Activated CD8-positive, alpha-beta memory T cell treated with anti-CD3 and anti-CD28 coated beads, Interleukin-2, amount 10 ng/mL, durations not matched to agents 7 days and 5 days (primary cell): ENCODE measurements at regions of chr1 and their contacts with region 1.

Region 1: DNA sequence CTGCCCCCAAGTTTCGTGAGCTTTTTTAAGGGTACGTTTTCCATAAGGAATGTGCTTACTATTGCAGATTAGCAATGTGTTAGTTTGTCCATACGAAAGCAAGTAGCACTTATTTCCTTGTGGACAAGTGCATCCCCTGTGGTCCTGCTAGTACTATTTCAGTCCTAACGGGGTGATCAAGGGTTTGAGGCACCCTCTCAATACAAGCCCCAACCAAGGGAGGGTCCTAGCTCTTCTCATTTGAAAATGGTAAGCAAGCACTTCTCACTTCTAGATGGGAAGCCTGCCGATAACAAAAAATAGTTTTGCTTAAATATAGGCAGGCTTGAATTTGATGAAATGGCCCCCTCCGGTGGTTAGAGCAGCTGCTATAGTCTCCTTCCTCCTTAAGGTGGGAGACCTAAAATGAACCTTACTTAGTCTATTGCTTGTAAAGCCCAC is 64.0 kb upstream of the HMCN1 start:
- DNase-seq: peak; percentile 77
- ATAC-seq: peak; percentile 89
- H3K4me3 Mint-ChIP-seq: no peak overlapping the region
- H3K27ac Mint-ChIP-seq: no peak overlapping the region
- H3K4me1 Mint-ChIP-seq: peaks cover 45% of the 10 kb centered on the region
- H3K27me3 Mint-ChIP-seq: no peaks in the 10 kb centered on the region

Region 2: GRCh38 chr1:185170291-185170848 is 499.8 kb before region 1 on chr1:
- CTCF ChIA-PET with region 1: interaction called, 12 read pairs
- DNase-seq: peak; percentile 68
- ATAC-seq: peak; percentile 92
- H3K4me3 Mint-ChIP-seq: no peak overlapping the region
- H3K27ac Mint-ChIP-seq: peak overlapping the region; percentile 28
- H3K4me1 Mint-ChIP-seq: peaks cover 19% of the 10 kb centered on the region
- H3K27me3 Mint-ChIP-seq: no peaks in the 10 kb centered on the region

Region 3: GRCh38 chr1:185317034-185317885 is 352.9 kb before region 1 on chr1 and contains the start of gene IVNS1ABP:
- CTCF ChIA-PET with region 1: interaction called, 25 read pairs
- DNase-seq: peak; percentile 97
- ATAC-seq: peak; percentile 75
- H3K4me3 Mint-ChIP-seq: peak within 1 kb of the TSS; percentile 99
- H3K27ac Mint-ChIP-seq: peak within 1 kb of the TSS; percentile 97
- H3K4me1 Mint-ChIP-seq: peaks cover 44% of the 10 kb centered on the region
- H3K27me3 Mint-ChIP-seq: no peaks in the 10 kb centered on the region
- total RNA-seq, gene IVNS1ABP: 251 to 509 TPM

Region 4: GRCh38 chr1:185453496-185454192 is 216.6 kb before region 1 on chr1:
- CTCF ChIA-PET with region 1: no interaction called
- DNase-seq: no peak
- ATAC-seq: no peak
- H3K4me3 Mint-ChIP-seq: no peak overlapping the region
- H3K27ac Mint-ChIP-seq: no peak overlapping the region
- H3K4me1 Mint-ChIP-seq: no peaks in the 10 kb centered on the region
- H3K27me3 Mint-ChIP-seq: no peaks in the 10 kb centered on the region

Region 5: GRCh38 chr1:185566995-185567394 is 103.2 kb before region 1 on chr1:
- CTCF ChIA-PET with region 1: interaction called, 10 read pairs
- DNase-seq: peak; percentile 79
- ATAC-seq: peak; percentile 78
- H3K4me3 Mint-ChIP-seq: peak overlapping the region; percentile 39
- H3K27ac Mint-ChIP-seq: peak overlapping the region; percentile 88
- H3K4me1 Mint-ChIP-seq: peaks cover 51% of the 10 kb centered on the region
- H3K27me3 Mint-ChIP-seq: no peaks in the 10 kb centered on the region

Region 6: DNA sequence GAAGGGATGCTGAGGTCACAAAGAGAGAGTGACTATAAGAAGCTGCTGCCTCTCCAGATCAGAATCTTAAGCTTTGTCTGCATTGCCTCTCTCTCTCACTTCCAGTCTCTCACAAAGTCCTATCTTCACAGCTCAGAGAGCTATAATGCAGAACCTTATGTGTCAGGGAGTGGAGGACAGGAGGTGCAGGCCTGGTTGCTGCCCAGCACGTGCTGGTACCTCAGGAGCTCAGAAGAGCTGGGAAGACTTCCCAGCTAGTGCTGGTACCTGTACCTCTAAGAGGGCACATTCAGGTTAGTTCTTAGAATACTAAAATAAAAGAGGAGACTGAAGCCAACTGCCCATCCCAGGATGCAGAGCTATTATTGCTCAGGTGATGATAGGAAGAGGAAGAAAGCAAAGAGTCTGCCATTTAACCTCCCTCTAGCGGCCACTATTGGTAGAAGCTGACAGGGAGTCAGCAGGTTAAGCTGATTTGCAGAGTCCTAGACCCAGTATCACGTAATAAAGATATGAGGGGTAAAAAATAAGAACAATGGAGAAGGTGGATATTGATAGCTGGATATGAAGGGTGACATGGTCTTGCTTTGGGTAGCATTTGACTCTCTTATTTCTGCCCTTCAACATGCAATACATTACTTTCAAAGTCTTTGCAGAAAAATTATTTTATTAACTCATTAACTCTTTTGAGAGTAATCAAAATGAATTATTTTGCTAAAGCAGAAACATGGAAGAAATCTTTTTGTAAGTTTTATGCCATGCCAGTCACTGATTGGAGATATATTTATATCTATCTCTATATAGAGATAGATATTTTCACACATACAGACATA is 74.2 kb before region 1 on chr1:
- CTCF ChIA-PET with region 1: interaction called, 13 read pairs
- DNase-seq: peak; percentile 64
- ATAC-seq: peak; percentile 53
- H3K4me3 Mint-ChIP-seq: no peak overlapping the region
- H3K27ac Mint-ChIP-seq: no peak overlapping the region
- H3K4me1 Mint-ChIP-seq: peaks cover 23% of the 10 kb centered on the region
- H3K27me3 Mint-ChIP-seq: no peaks in the 10 kb centered on the region

Region 7: GRCh38 chr1:185636848-185637247 is 33.4 kb before region 1 on chr1:
- CTCF ChIA-PET with region 1: interaction called, 11 read pairs
- DNase-seq: peak; percentile 85
- ATAC-seq: peak; percentile 96
- H3K4me3 Mint-ChIP-seq: peak overlapping the region; percentile 7
- H3K27ac Mint-ChIP-seq: peak overlapping the region; percentile 88
- H3K4me1 Mint-ChIP-seq: peaks cover 41% of the 10 kb centered on the region
- H3K27me3 Mint-ChIP-seq: no peaks in the 10 kb centered on the region

Region 8: GRCh38 chr1:185652348-185652747 is 17.9 kb before region 1 on chr1:
- CTCF ChIA-PET with region 1: interaction called, 19 read pairs
- DNase-seq: no peak
- ATAC-seq: no peak
- H3K4me3 Mint-ChIP-seq: no peak overlapping the region
- H3K27ac Mint-ChIP-seq: no peak overlapping the region
- H3K4me1 Mint-ChIP-seq: peaks cover 9% of the 10 kb centered on the region
- H3K27me3 Mint-ChIP-seq: no peaks in the 10 kb centered on the region

Region 9: GRCh38 chr1:185984113-185984836 is 314.1 kb after region 1 on chr1:
- CTCF ChIA-PET with region 1: no interaction called
- DNase-seq: no peak
- ATAC-seq: no peak
- H3K4me3 Mint-ChIP-seq: no peak overlapping the region
- H3K27ac Mint-ChIP-seq: no peak overlapping the region
- H3K4me1 Mint-ChIP-seq: peaks cover 9% of the 10 kb centered on the region
- H3K27me3 Mint-ChIP-seq: peaks cover 3% of the 10 kb centered on the region